Right cardiac atrium (tissue), 5 donors: ENCODE measurements at regions of chr17 and their contacts with region 1.

Region 1: GRCh38 chr17:44389723-44390202 is 314 bp upstream of the ITGA2B start:
- DNase-seq: no peak
- ATAC-seq: no peak
- H3K4me3 ChIP-seq: no peak overlapping the region
- H3K27ac ChIP-seq: no peak overlapping the region
- H3K4me1 ChIP-seq: peaks cover 4% of the 10 kb centered on the region
- H3K27me3 ChIP-seq: no peaks in the 10 kb centered on the region

Region 2: GRCh38 chr17:44518032-44518431 is 128.3 kb after region 1 on chr17:
- intact Hi-C with region 1: loop called in 1 of 4 experiments (anchors 10 kb)
- DNase-seq: no peak
- ATAC-seq: no peak
- H3K4me3 ChIP-seq: no peak overlapping the region
- H3K27ac ChIP-seq: no peak overlapping the region
- H3K4me1 ChIP-seq: no peaks in the 10 kb centered on the region
- H3K27me3 ChIP-seq: no peaks in the 10 kb centered on the region

Region 3: DNA sequence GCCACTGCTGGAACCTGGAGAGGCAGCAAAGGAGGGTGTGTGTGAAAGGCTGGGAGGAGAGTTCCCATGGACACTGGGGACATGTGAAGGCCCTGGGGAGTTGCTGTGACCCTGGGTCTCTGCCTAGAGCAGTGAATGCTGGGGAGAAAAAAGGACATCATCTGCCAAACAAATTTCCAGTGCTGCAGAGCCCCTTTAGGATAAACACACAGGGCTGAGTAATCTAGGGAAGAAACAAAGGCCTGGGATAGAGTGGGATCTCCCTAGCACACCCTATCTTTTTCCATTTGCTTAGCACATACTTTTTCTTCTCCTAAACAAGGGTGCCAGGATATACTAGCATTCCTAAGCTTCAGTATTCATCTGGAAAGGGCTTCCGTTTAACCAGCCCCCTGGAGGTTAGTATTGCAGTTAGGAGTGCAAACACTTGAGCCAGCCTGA is 454.6 kb after region 1 on chr17:
- intact Hi-C with region 1: no loop called
- DNase-seq: peak in 1 of 3 donors; percentile 68
- ATAC-seq: peak; percentile 40 to 46
- H3K4me3 ChIP-seq: no peak overlapping the region
- H3K27ac ChIP-seq: no peak overlapping the region
- H3K4me1 ChIP-seq: no peaks in the 10 kb centered on the region
- H3K27me3 ChIP-seq: no peaks in the 10 kb centered on the region